ENCODE measurements at regions of chr7 and their contacts with region 1.

Region 1: GRCh38 chr7:154927624-154928143 is 75.2 kb downstream of the PAXIP1 start:
- DNase-seq: peak; percentile 83
- H3K4me3 Mint-ChIP-seq: peak overlapping the region; percentile 95
- H3K27ac Mint-ChIP-seq: peak overlapping the region; percentile 94
- H3K4me1 Mint-ChIP-seq: peaks cover 24% of the 10 kb centered on the region
- H3K27me3 Mint-ChIP-seq: no peaks in the 10 kb centered on the region

Region 2: GRCh38 chr7:154837622-154838021 is 90.1 kb before region 1 on chr7:
- CTCF ChIA-PET with region 1: no interaction called
- POLR2A ChIA-PET with region 1: no interaction called
- intact Hi-C with region 1: no loop called
- DNase-seq: no peak
- H3K4me3 Mint-ChIP-seq: no peak overlapping the region
- H3K27ac Mint-ChIP-seq: no peak overlapping the region
- H3K4me1 Mint-ChIP-seq: no peaks in the 10 kb centered on the region
- H3K27me3 Mint-ChIP-seq: peaks cover 3% of the 10 kb centered on the region

Region 3: DNA sequence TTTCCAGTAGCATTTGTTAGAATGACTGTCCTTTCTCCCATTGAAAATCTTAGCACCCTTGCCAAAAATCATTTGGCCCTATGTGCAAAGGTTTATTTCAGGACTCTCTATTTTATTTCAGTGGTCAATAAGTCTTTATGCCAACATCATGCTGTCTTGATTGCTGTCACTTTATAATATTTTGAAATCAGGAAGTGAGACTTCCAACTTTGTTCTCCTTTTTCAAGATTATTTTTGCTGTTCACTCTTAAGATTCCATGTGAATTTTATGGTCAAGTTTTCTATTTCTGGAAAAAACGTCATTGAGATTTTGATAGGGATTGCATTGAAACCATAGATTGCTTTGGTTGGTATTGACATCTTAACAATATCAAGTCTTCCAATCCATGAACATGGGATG is 10.2 kb after region 1 on chr7:
- CTCF ChIA-PET with region 1: interaction called, 30 read pairs
- POLR2A ChIA-PET with region 1: no interaction called
- intact Hi-C with region 1: no loop called
- DNase-seq: no peak
- H3K4me3 Mint-ChIP-seq: no peak overlapping the region
- H3K27ac Mint-ChIP-seq: no peak overlapping the region
- H3K4me1 Mint-ChIP-seq: peaks cover 2% of the 10 kb centered on the region
- H3K27me3 Mint-ChIP-seq: no peaks in the 10 kb centered on the region

Region 4: DNA sequence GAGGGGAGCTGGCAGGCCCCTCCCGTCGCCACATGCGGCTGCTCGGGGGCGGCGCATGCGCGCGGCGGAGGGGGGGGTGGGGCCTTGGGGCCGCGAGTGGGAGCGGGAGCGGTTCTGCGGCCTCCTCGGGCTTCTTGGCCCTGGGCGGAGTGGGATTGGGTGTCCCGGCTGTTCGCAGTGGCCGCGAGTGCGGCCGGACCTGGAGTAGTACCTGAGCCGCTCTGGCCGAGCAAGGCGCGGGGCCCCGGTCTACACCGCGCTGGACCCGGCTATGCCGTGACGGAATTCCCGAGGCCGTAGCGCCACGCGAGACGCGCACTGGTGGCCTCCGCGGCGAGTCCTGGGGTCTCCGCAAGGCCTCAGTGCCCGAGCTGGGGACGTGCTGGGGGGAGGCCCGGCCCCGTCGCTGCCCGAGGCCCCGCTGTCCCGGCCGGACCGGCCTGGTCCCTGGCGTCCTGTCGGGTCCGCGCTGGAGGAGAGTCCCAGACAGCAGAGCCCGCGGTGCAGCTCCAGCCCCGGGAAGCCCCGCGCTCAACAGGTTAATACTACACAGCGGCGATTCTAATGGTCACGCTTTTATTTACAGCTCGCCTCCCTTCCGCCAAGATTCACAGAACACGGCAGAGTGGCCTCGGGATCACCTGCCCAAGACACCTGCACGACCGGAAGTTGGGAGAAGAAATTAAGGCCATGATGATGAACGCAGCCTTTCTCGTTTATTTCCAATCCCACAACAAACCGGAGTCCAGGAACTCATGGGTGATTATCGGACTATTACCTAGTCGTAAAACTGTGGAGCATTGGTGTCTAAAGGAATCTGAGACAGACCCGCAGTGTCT is 75.9 kb after region 1 on chr7:
- CTCF ChIA-PET with region 1: interaction called, 17 read pairs
- POLR2A ChIA-PET with region 1: interaction called, 4 read pairs
- intact Hi-C with region 1: loop called (anchors 1 kb)
- DNase-seq: peak; percentile 89
- H3K4me3 Mint-ChIP-seq: peak overlapping the region; percentile 89
- H3K27ac Mint-ChIP-seq: peak overlapping the region; percentile 91
- H3K4me1 Mint-ChIP-seq: peaks cover 12% of the 10 kb centered on the region
- H3K27me3 Mint-ChIP-seq: no peaks in the 10 kb centered on the region

Region 5: DNA sequence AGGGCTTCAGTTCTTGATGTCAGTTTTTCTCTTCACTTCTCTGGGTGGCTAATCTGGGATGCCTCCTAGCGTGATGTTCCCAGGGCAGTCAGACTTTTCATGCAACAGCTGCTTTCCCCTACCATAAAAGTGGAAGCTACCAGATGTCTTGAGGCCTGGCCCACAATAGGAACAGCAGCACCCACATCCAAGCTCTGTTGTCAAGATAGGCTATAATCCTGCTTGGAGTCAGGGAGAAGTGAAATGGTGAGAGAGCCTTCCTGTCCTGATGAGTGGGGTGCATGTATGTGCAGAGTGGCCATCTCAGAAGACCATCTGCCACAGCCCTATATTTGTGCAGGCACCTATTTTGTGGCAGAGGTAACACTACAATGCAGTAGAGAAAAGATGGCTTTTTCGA is 250.4 kb after region 1 on chr7:
- CTCF ChIA-PET with region 1: no interaction called
- POLR2A ChIA-PET with region 1: no interaction called
- intact Hi-C with region 1: no loop called
- DNase-seq: no peak
- H3K4me3 Mint-ChIP-seq: no peak overlapping the region
- H3K27ac Mint-ChIP-seq: no peak overlapping the region
- H3K4me1 Mint-ChIP-seq: no peaks in the 10 kb centered on the region
- H3K27me3 Mint-ChIP-seq: peaks cover 13% of the 10 kb centered on the region

Region 6: DNA sequence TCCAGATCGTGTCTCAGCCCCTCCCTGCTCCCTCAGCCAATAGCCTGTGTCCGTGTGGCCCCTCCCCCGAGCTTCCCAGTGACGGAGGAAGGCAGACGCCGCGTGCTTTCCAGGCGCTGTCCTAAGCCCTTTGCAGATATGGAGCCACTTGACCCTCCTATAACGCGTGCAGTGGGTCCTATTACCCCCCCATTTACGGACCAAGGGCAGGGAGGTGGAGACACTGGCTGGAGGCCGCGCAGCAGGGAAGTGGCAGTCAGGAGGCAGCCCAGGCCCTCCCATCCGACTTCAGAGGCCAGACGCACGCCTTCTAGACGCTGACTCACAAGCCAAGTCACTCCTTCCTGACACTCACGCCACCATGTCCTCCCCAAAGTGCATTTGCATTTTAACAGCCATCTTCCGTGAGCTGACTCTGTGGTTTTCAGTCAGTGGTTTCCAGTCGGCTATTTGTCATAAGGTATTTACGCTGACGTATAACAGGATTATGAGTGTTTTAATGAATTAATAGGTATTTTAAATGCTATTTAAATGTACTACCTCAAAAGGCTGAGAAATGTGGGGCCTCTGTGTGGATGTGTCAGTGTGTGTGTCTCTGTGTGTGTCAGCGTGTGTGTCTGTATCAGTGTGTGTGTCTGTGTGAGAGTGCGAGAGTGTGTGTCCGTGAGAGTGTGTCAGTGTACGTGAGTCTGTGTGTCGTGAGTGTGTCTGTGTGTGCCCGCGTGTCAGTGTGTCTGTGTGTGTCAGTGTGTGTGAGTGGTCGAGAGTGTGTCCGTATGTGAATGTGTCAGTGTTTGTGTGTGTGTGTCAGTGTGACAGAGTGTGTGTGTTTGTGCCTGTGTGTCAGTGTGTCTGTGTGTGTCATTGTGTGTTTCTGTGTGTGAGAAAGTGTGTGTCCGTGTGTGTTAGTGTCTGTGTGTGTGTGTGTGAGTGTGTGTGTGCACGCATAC is 278.0 kb after region 1 on chr7:
- CTCF ChIA-PET with region 1: interaction called, 9 read pairs
- POLR2A ChIA-PET with region 1: no interaction called
- intact Hi-C with region 1: loop called (anchors 1 kb)
- DNase-seq: peak; percentile 96
- H3K4me3 Mint-ChIP-seq: peak overlapping the region; percentile 75
- H3K27ac Mint-ChIP-seq: peak overlapping the region; percentile 100
- H3K4me1 Mint-ChIP-seq: peaks cover 45% of the 10 kb centered on the region
- H3K27me3 Mint-ChIP-seq: no peaks in the 10 kb centered on the region

Region 7: GRCh38 chr7:155356323-155357105 is 428.8 kb after region 1 on chr7:
- CTCF ChIA-PET with region 1: interaction called, 13 read pairs
- POLR2A ChIA-PET with region 1: no interaction called
- intact Hi-C with region 1: no loop called
- DNase-seq: no peak
- H3K4me3 Mint-ChIP-seq: no peak overlapping the region
- H3K27ac Mint-ChIP-seq: no peak overlapping the region
- H3K4me1 Mint-ChIP-seq: no peaks in the 10 kb centered on the region
- H3K27me3 Mint-ChIP-seq: peaks cover 20% of the 10 kb centered on the region

Region 8: GRCh38 chr7:155763691-155764437 is 836.2 kb after region 1 on chr7:
- CTCF ChIA-PET with region 1: interaction called, 5 read pairs
- POLR2A ChIA-PET with region 1: no interaction called
- intact Hi-C with region 1: loop called (anchors 10 kb)
- DNase-seq: peak; percentile 80
- H3K4me3 Mint-ChIP-seq: peak overlapping the region; percentile 76
- H3K27ac Mint-ChIP-seq: peak overlapping the region; percentile 99
- H3K4me1 Mint-ChIP-seq: peaks cover 52% of the 10 kb centered on the region
- H3K27me3 Mint-ChIP-seq: no peaks in the 10 kb centered on the region